Posterior vena cava (tissue), 2 donors: ENCODE measurements at regions of chr22 and their contacts with region 1.

Region 1: DNA sequence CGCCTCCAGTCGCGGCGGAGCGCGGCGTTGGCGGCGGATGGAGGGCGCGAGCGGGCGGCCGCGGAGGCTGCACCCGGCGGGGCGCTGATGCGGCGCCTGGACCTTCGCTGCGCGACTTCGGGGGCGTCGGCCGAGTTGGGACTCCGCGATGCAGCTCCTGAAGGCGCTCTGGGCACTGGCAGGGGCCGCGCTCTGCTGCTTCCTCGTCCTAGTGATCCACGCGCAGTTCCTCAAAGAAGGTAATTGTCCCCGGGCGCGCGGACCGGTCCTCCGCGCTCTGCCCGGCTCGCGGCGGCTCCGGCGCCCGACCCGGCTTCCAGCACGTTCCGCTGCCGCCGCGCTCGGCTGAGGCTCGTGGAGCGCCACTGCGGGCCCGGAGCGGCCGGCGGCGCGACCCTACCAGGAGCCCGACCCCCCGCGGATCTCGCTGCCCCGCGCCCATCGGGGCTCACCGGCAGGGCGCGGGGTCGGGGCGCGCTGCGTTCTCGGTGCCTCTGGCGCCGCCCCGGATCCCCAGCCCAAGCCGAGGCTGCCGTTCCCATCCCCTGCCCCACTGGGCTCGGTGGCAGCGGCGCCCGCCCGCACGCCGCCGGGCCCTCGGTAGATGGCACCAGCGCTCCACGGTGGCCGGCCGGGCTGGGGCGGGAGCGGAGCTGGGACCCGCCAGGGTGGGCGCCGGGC is 1251.2 kb downstream of the BRD1 start:
- DNase-seq: no peak

Region 2: DNA sequence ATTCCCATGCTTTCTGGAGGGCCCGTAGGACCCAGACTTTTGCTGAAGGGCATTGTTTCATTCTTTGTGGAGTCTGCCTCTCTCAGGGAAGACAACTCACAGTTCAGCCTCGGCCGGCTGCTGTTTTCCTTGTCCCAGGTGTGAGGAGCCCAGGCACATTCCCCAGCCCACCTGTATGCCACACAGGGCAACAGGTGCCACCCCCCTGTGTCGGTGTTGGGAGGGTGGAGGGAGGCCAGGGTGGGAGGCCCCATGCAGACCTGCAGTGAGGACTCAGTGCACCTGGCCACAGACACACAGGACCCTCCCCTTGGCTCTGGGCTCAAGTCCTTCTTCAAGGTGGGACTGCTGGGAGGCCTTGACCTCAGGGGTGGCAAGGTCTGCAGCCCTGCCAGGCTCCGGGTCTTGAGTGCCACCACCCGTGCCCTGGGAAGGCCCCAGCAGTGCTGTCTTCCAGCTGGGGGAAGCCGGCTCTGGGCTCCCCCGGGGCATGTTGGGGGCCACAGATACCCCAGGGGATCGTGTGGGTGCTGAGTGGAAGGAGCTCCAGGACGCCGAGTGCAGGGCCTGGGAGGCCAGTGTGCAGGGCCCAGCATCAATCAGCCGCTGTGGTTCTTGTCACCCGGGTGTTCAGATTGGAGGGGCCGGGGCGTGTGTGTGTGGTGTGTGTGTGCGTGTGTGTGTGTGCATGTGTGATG is 34.9 kb before region 1 on chr22:
- intact Hi-C with region 1: loop called in 1 of 2 experiments (anchors 2 kb)
- DNase-seq: no peak

Region 3: GRCh38 chr22:49289822-49290679 is 713.6 kb after region 1 on chr22:
- intact Hi-C with region 1: no loop called
- DNase-seq: peak; percentile 59